ENCODE measurements at regions of chr5 and their contacts with region 1.

Region 1: GRCh38 chr5:119336845-119337580 is 18.8 kb upstream of the TNFAIP8 start:
- DNase-seq: no peak
- ATAC-seq: no peak
- H3K4me3 ChIP-seq: no peak overlapping the region
- H3K27ac ChIP-seq: no peak overlapping the region
- H3K4me1 ChIP-seq: peaks cover 4% of the 10 kb centered on the region
- H3K27me3 ChIP-seq: no peaks in the 10 kb centered on the region
- CTCF ChIP-seq: no peak
- POLR2A ChIP-seq: no peak
- RAD21 ChIP-seq: no peak

Region 2: DNA sequence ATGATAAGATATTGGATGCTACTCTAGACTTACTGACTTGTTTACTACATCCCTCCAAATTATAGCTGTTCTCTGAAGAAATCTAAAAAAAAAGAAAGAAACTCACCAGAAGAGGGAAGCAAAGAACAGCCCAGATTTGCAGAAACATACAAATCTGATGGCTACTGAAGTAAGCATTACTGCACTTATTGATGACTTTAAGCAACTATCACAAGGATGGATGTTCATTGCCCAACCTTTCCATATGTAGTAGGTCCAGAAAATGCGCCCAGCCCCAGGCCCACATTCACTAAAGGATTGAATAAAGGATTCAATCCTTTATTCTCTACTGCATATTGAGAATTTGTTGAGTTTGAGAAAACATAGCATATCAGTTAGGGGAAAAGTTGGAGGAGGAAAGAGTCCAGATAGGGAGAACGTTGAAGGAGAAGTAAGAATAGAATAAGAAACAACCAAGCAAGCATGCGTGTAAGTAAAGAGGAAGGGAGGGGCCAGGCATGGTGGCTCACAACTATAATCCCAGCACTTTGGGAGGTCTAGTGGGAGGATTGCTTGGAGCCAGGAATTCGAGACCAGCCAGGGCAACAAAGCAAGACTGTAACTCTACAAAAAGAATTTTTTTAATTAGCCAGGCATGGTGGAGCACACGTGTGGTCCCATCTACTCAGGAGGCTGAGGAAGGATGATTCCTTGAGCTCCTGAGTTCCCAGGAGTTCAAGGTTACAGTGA is 314.8 kb before region 1 on chr5:
- CTCF ChIA-PET with region 1: no interaction called
- POLR2A ChIA-PET with region 1: no interaction called
- dilution Hi-C with region 1: no loop called
- in situ Hi-C with region 1: no loop called
- intact Hi-C with region 1: loop called (anchors 5 kb)
- DNase-seq: peak; percentile 57
- ATAC-seq: peak; percentile 80
- H3K4me3 ChIP-seq: no peak overlapping the region
- H3K27ac ChIP-seq: no peak overlapping the region
- H3K4me1 ChIP-seq: no peaks in the 10 kb centered on the region
- H3K27me3 ChIP-seq: no peaks in the 10 kb centered on the region
- CTCF ChIP-seq: peak; percentile 66
- POLR2A ChIP-seq: no peak
- RAD21 ChIP-seq: peak; percentile 80

Region 3: DNA sequence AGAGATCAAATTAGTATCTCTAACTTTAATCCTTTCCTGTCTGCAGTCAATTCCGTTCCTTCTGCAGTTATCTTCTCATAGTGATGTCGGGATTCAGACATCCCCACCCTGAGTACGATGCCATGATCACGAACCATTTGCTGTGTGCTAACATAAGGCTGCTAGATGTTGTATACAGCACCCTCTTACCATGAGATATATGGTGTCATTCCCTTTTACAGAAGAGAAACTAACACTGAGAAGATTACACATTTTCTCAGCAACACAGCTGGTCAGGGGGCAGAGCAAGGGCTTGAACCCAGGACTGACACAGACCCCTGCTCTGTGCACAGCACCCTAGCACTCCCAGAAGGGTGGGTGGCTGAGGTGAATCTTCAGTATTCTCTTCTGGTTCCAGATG is 68.4 kb after region 1 on chr5:
- CTCF ChIA-PET with region 1: no interaction called
- POLR2A ChIA-PET with region 1: no interaction called
- dilution Hi-C with region 1: no loop called
- in situ Hi-C with region 1: no loop called
- intact Hi-C with region 1: no loop called
- DNase-seq: no peak
- ATAC-seq: no peak
- H3K4me3 ChIP-seq: no peak overlapping the region
- H3K27ac ChIP-seq: no peak overlapping the region
- H3K4me1 ChIP-seq: 0 out of 2 replicates have a peak, but pooled peaks cover 1% of the 10 kb centered on the region
- H3K27me3 ChIP-seq: peaks cover 7% of the 10 kb centered on the region
- CTCF ChIP-seq: no peak
- POLR2A ChIP-seq: no peak
- RAD21 ChIP-seq: no peak

Region 4: DNA sequence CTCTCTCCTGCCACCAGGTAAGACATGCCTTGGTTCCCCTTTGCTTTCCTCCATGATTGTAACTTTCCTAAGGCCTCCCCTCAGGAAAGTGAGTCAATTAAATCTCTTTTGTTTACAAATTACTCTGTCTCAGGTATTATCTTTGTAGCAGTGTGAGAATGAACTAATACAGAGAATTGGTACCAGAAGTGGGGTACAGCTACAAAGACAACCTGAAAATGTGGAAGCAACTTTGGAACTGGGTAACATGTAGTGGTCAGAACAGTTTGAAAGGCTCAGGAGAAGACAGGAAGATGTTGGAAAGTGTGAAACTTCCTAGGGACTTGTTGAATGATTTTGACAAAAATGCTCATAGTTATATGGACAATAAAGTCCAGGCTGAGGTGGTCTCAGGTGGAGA is 389.5 kb after region 1 on chr5:
- CTCF ChIA-PET with region 1: no interaction called
- POLR2A ChIA-PET with region 1: no interaction called
- dilution Hi-C with region 1: no loop called
- in situ Hi-C with region 1: no loop called
- intact Hi-C with region 1: no loop called
- DNase-seq: no peak
- ATAC-seq: no peak
- H3K4me3 ChIP-seq: no peak overlapping the region
- H3K27ac ChIP-seq: no peak overlapping the region
- H3K4me1 ChIP-seq: no peaks in the 10 kb centered on the region
- H3K27me3 ChIP-seq: no peaks in the 10 kb centered on the region
- CTCF ChIP-seq: no peak
- POLR2A ChIP-seq: no peak
- RAD21 ChIP-seq: no peak